AG04449 (cell line): ENCODE measurements at regions of chr13 and their contacts with region 1.

Region 1: DNA sequence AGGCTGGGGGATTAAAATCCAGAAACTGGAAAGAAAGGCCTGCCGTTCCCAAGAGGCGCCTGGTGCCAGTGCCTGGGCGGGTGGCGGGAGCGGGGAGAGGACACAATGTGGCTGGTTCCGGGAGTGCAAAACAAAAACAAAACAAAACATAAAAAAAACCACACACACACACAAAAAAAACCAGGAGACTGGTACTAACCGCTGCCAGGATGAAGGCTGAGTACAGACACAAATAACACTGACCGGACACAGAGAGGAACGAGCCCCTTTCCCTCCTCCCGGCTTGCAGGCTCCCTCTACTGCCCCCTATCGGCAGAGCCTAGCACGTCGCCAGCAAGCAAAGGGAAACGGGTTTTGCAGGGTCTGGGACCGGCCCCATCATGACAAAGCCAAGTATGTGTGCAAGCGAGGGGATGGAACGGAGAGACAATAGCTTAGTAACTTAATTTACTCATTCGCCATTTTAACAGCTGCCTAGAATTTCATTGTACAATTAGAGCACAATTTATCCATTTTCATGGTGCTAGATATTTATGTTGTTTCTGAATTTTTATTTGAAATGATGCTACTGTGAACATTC is 17.9 kb upstream of the ZDHHC20 start:
- DNase-seq: no peak
- H3K4me3 ChIP-seq: peak overlapping the region; percentile 47
- CTCF ChIP-seq: peak; percentile 98

Region 2: GRCh38 chr13:20945952-20946383 is 531.0 kb before region 1 on chr13:
- CTCF ChIA-PET with region 1: interaction called, 17 read pairs
- POLR2A ChIA-PET with region 1: no interaction called
- DNase-seq: no peak
- H3K4me3 ChIP-seq: peak overlapping the region; percentile 35
- CTCF ChIP-seq: no peak

Region 3: DNA sequence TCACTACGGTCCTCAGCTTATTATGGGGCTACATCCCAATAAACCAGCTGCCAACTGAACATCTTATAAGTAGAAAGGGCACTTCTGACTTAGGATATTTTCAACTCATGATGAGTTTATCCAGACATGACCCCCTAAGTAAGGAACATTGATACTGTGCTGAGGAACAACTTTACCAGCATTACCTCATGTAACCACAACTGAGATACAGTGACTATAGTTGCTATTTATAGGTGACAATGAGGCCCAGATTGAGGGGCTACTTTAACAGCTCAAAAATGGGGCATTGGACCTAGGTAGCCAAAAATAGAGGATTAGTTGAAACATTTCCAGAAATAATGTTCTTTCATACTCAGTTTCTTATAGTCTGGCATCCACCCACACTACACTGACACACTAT is 327.4 kb before region 1 on chr13:
- CTCF ChIA-PET with region 1: interaction called, 11 read pairs
- POLR2A ChIA-PET with region 1: no interaction called
- DNase-seq: no peak
- H3K4me3 ChIP-seq: no peak overlapping the region
- CTCF ChIP-seq: no peak

Region 4: GRCh38 chr13:21297914-21298831 is 178.8 kb before region 1 on chr13:
- CTCF ChIA-PET with region 1: interaction called, 187 read pairs
- POLR2A ChIA-PET with region 1: no interaction called
- DNase-seq: peak; percentile 10
- H3K4me3 ChIP-seq: peak overlapping the region; percentile 94
- CTCF ChIP-seq: peak; percentile 97

Region 5: DNA sequence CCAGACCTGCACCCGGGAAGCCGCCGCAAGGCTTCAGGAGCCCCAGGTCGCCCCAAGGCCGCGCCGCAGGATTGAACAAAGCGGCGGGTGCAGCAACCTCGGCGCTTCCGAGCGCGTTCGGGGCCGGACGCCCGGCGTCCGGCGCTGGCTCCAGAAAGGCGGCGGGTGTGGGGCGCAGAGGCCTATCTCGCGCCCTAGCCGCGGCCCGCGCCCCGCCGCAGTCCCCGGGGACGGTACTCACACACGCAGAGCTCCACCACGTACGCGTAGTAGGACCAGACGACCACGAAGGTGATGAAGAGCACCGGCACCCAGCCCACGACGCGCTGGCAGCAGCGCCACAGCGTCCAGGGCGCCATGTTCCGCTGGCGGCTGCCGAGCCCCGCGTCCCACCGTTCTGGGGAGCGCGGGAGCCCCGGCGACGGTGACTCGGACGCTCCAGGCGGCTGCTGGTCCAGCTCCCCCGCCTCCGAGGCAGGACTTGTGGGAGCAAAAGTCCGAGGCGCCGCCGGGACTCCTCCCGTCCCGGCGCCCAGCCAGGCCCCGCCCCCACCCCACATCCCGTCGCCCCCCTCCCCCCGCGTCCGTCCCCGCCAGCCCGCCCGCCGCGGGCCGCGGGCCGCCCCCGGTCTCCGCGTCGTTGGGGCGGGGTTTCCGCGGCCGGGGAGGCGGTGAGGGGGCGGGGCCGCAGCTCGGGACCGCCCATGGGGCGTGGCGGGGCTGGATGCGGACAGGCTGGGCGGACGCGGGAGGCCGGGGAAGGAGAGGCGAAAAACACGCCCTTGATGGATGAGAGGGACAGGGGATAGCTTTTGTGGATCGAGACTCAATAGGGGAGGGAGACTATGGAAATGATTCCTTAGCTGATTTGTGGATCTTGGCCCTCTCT is 17.9 kb before region 1 on chr13 and contains the start of gene ZDHHC20:
- CTCF ChIA-PET with region 1: interaction called, 143 read pairs
- POLR2A ChIA-PET with region 1: no interaction called
- DNase-seq: no peak
- H3K4me3 ChIP-seq: peak within 1 kb of the TSS; percentile 91
- CTCF ChIP-seq: no peak

Region 6: DNA sequence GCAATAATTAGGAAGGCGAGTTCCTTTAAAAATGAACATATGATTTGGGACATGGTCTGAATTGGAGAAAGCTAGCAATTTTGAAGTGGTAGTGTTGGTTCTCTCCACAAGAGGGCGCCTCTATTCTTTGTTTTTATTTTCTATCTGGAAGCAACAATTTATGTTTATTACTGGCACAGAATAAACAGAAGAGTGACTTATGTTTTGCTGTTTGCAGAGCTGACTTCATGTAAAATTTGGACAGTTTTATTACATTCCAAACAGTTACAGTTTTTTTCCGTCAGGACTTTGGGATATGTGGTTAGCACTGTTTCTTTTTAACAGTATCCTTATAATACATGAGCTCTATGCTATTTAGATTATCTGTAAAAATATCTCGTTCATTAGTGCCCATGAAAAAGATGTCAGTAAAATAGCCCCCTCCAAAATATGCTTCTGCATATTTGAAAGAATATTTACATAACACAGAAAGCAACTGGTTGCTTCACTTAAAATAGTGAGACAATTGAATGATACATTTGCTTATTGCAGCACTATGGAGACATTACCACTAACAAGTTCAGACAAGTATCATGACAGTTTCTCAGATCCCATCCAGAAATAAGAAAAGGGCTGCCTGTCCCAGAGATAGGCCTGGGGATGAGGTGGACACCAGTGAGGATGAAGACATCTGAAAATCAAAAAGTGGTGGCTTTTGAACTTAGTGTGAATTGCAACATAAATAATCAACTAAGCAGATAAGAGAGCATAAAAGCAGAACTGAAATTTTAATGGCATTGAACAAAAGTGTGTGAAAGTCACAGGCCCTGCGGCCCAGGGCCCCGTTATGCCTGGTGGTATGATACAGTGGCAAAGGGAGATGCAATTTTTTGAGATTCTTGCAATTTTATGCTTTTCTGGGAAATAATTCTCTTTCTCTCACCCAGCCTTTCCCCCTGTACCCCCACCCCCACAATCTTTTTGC is 161.6 kb after region 1 on chr13:
- CTCF ChIA-PET with region 1: no interaction called
- POLR2A ChIA-PET with region 1: no interaction called
- DNase-seq: no peak
- H3K4me3 ChIP-seq: no peak overlapping the region
- CTCF ChIP-seq: peak; percentile 54